GM12878 (cell line): ENCODE measurements at regions of chr10 and their contacts with region 1.

Region 1: DNA sequence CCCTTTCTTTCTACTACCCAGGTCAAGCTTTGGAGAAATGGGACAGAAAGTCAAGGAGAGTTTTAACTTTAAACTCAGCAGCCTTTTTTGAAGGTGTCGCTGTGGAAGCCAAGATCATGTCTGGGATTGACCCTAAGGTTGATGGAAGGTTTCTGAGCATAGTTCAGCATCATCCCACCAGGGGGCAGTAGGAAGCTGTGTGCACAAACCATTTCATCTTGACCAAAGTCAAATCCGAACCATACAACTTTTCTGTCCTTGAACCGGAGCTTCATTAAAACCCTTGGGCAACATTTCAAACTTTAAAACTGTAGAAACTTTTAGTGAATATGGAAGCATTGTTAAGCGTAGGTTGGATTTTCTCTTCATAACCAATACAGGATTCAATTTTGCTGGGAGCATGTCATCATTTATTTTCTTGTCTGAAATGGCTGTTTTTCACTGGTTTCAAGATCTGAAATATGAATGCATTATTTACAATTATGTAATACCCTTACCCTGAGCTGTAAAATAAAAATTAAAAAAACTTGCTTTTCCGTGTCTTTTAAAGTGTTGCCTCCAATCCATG is 214.4 kb upstream of the KIAA1217 start:
- DNase-seq: peak; percentile 5
- ATAC-seq: peak; percentile 84
- H3K4me3 ChIP-seq: no peak overlapping the region
- H3K27ac ChIP-seq: no peak overlapping the region
- H3K4me1 ChIP-seq: no peaks in the 10 kb centered on the region
- H3K27me3 ChIP-seq: no peaks in the 10 kb centered on the region; a peak in 1 of 4 replicates
- CTCF ChIP-seq: peak; percentile 74 to 79 (median 79)
- EP300 ChIP-seq: no peak
- POLR2A ChIP-seq: no peak
- RAD21 ChIP-seq: peak; percentile 81

Region 2: GRCh38 chr10:23981520-23982309 is 12.8 kb before region 1 on chr10:
- CTCF ChIA-PET with region 1: interaction called, 6 read pairs
- POLR2A ChIA-PET with region 1: no interaction called
- RAD21 ChIA-PET with region 1: no interaction called
- SMC1A ChIA-PET with region 1: interaction called, 11 read pairs
- in situ Hi-C with region 1: no loop called
- intact Hi-C with region 1: no loop called
- DNase-seq: no peak
- ATAC-seq: no peak
- H3K4me3 ChIP-seq: no peak overlapping the region
- H3K27ac ChIP-seq: no peak overlapping the region
- H3K4me1 ChIP-seq: no peaks in the 10 kb centered on the region
- H3K27me3 ChIP-seq: no peaks in the 10 kb centered on the region
- CTCF ChIP-seq: no peak
- EP300 ChIP-seq: no peak
- POLR2A ChIP-seq: no peak
- RAD21 ChIP-seq: no peak

Region 3: DNA sequence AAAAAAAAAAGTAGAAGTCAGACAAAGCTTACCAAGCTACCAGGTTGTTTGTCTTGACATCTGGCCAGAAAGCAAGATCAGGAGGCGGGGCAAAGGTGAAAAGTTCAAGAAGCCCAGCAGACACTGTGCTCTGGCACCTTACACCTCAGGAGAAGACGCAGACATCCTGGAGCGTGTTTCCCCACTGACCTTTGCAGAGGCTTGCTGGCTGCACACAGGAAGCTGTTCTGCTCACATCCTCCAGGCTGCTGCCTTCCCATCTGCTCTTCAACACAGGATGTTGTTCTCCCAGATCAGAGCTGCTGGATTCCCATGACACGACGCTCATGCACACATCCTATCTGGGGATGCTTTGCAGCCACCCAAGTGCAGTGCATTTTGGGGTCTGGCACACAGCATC is 40.0 kb after region 1 on chr10:
- CTCF ChIA-PET with region 1: no interaction called
- POLR2A ChIA-PET with region 1: no interaction called
- RAD21 ChIA-PET with region 1: no interaction called
- SMC1A ChIA-PET with region 1: no interaction called
- in situ Hi-C with region 1: no loop called
- intact Hi-C with region 1: no loop called
- DNase-seq: no peak
- ATAC-seq: no peak
- H3K4me3 ChIP-seq: no peak overlapping the region
- H3K27ac ChIP-seq: no peak overlapping the region
- H3K4me1 ChIP-seq: no peaks in the 10 kb centered on the region
- H3K27me3 ChIP-seq: no peaks in the 10 kb centered on the region
- CTCF ChIP-seq: no peak
- EP300 ChIP-seq: no peak
- POLR2A ChIP-seq: no peak
- RAD21 ChIP-seq: no peak

Region 4: DNA sequence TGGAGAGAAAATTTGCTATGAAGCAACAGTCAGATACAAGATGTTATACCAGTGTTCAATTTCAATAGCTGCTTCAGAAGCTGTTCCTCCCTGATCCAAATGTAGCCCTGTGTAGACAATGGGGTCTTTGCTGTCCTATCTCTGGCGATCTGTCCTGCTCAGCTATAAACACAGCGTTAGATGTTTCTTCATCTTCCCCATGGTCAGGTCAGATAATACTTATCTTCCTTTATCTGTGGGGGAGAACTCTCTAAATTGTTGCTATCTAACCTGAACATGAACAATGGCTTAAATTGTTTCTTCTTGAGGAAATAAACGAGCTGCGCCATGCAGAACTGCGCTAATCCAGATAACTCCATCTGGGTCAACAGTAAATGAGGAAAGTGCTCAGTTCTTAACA is 198.8 kb after region 1 on chr10:
- CTCF ChIA-PET with region 1: interaction called, 43 read pairs
- POLR2A ChIA-PET with region 1: no interaction called
- RAD21 ChIA-PET with region 1: interaction called, 10 read pairs
- SMC1A ChIA-PET with region 1: interaction called, 8 read pairs
- in situ Hi-C with region 1: loop called (anchors 5 kb)
- intact Hi-C with region 1: loop called (anchors 1 kb)
- DNase-seq: no peak
- ATAC-seq: no peak
- H3K4me3 ChIP-seq: no peak overlapping the region
- H3K27ac ChIP-seq: no peak overlapping the region
- H3K4me1 ChIP-seq: no peaks in the 10 kb centered on the region
- H3K27me3 ChIP-seq: no peaks in the 10 kb centered on the region
- CTCF ChIP-seq: no peak
- EP300 ChIP-seq: no peak
- POLR2A ChIP-seq: no peak
- RAD21 ChIP-seq: no peak

Region 5: DNA sequence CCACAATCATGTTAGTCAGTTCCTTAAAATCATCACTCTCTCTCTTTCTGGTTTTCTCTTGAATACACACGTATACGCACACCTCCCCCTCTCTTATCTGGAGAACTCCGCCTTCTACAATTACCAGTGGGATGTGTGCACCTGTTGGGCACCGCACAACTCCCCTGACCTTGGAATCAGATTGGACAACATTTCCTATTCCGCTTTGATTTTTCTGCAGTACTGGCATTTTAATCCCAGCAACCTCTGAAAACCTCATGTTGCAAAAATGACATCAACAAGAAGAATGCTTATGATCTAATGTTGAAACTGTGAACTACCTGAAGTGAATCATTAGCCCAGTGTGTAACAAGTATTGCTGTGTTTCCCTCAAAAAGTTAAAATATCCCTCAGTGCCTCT is 324.0 kb after region 1 on chr10:
- CTCF ChIA-PET with region 1: interaction called, 3 read pairs
- POLR2A ChIA-PET with region 1: no interaction called
- RAD21 ChIA-PET with region 1: interaction called, 3 read pairs
- SMC1A ChIA-PET with region 1: no interaction called
- in situ Hi-C with region 1: no loop called
- intact Hi-C with region 1: loop called (anchors 2 kb)
- DNase-seq: no peak
- ATAC-seq: peak; percentile 43
- H3K4me3 ChIP-seq: no peak overlapping the region
- H3K27ac ChIP-seq: no peak overlapping the region
- H3K4me1 ChIP-seq: no peaks in the 10 kb centered on the region
- H3K27me3 ChIP-seq: no peaks in the 10 kb centered on the region
- CTCF ChIP-seq: no peak
- EP300 ChIP-seq: no peak
- POLR2A ChIP-seq: no peak
- RAD21 ChIP-seq: no peak

Region 6: DNA sequence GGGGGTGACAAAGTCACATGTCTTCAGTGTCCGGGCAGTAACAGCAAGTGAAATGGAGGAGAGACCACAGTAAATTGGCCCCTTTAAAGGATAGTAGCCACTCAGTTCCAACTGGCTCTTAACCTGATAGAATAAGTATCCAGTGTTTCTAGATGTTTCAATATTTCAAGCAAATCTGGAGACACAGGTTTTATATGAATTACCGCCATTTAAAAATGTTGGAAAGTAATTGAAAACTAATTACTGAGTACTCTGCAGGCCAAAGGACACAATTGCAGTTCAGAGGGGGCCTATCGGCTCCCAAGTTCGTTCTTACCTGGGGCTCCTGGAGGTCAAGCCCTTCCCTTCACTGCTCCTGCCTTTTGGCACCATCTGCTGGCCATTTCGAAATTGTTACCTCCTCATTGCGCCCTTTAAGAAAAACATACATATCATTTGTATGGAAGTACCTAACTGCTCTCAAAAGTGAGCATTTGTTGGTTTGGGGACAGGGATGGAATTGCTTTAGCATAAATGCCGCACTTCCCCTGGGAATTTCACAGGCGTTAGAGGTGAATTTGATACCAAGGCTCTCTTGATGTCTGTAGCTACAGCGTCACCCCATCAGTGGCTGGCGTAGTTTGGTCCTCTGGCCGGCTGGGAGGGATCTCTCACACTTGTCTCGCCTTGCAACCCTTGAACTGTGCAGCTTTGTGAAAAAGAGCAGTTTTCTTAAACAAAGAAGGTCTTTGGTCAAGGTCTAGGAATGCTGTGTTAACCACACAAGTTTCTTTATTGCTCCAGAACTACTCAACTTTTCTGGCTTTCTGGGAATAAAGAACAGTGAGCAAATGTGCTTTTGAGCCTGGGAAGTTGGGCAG is 509.1 kb after region 1 on chr10:
- CTCF ChIA-PET with region 1: interaction called, 53 read pairs
- POLR2A ChIA-PET with region 1: no interaction called
- RAD21 ChIA-PET with region 1: interaction called, 14 read pairs
- SMC1A ChIA-PET with region 1: interaction called, 32 read pairs
- in situ Hi-C with region 1: no loop called
- intact Hi-C with region 1: loop called (anchors 1 kb)
- DNase-seq: peak; percentile 36
- ATAC-seq: peak; percentile 93
- H3K4me3 ChIP-seq: no peak overlapping the region
- H3K27ac ChIP-seq: no peak overlapping the region
- H3K4me1 ChIP-seq: no peaks in the 10 kb centered on the region
- H3K27me3 ChIP-seq: no peaks in the 10 kb centered on the region; a peak in 1 of 4 replicates
- CTCF ChIP-seq: peak; percentile 50 to 73 (median 60); a peak in 5 of 6 replicates
- EP300 ChIP-seq: no peak
- POLR2A ChIP-seq: no peak
- RAD21 ChIP-seq: peak; percentile 92

Region 7: DNA sequence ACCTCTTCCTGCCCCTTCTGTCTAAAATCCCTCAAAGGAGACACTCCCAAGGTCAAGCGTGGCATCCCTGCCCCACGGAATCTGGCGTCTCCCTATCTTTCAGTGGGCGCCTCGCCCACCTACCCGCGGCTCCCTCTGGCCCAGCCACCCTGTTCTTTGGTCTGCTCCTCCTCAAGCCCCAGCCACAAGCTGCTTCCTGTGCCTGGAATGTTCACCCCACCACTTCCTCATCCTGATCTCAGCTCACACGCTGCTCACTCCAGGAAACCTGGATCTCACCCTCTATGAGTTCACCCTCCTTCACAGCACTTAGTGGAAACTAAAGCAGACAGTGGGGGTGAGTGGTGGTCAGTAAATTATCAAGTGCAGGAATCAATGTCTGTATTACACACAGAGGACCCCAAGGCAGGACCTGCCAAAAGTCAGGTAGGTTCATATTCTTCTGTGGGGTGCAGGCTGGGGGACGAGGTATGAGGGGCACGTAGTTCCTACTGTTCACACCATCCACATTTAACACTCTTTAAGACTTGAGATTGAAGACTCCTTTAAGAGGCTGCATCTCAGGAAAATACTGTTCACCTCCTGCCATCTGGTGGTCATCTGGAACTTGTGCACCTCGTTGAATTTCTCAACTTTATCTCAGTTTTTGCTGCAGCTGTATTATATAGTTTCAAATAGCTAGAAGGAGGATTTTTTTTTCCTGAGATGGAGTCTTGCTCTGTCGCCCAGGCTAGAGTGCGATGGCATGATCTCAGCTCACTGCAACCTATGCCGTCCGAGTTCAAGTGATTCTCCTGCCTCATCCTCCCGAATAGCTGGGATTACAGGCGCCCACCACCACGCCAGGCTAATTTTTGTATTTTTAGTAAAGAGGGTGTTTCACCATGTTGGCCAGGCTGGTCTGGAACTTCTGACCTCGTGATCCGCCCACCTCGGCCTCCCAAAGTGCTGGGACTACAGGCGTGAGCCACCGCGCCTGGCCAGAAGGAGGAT is 562.5 kb after region 1 on chr10:
- CTCF ChIA-PET with region 1: interaction called, 36 read pairs
- POLR2A ChIA-PET with region 1: no interaction called
- RAD21 ChIA-PET with region 1: interaction called, 14 read pairs
- SMC1A ChIA-PET with region 1: interaction called, 15 read pairs
- in situ Hi-C with region 1: loop called (anchors 10 kb)
- intact Hi-C with region 1: loop called (anchors 2 kb)
- DNase-seq: no peak
- ATAC-seq: peak; percentile 77
- H3K4me3 ChIP-seq: no peak overlapping the region
- H3K27ac ChIP-seq: no peak overlapping the region
- H3K4me1 ChIP-seq: no peaks in the 10 kb centered on the region
- H3K27me3 ChIP-seq: no peaks in the 10 kb centered on the region; a peak in 1 of 4 replicates
- CTCF ChIP-seq: peak; percentile 61 to 65 (median 61); a peak in 5 of 6 replicates
- EP300 ChIP-seq: no peak
- POLR2A ChIP-seq: no peak
- RAD21 ChIP-seq: peak; percentile 75